CD14-positive monocyte (primary cell): ENCODE measurements at regions of chr13 and their contacts with region 1.

Region 1: DNA sequence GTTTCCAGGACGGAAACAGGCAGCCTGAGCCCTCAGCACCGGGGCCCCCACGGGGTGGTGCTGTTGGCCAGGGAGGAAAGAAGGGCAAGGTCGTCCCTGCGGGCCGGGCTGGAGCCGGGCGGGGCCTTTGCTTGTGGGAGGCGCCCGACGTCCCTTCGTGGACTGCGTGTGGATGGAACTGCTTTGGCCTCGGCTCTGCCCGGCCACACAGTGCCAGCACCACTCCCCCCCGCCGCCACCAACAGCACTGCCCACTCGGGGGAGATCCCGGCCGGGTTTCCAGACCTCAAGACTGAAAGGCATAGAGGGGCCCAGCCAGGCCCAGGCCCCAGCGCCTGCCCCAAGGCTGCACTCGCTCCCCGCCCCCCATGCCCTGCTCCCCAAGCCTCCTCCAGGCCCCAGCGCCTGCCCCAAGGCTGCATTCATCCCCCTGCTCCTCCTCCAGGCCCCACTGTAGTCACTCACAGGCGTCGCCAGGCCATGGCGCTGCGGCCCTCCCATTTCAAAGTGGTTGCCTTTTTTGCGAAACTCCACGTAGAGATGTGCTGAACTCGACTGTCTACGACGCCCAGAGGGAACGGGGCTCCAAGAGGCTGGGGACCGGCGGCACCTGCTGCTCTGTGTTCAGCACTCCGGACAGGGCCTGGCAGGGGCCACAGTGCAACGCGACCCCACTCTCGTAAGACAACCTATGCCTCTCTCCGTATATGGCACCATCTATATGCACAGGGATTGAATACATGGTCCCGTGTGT is 22.5 kb downstream of the C13orf46 start:
- DNase-seq: peak; percentile 71 to 74 (median 73)
- H3K4me3 ChIP-seq: peak overlapping the region in 1 of 3 experiments; percentile 50
- H3K4me3 Mint-ChIP-seq: peak overlapping the region; percentile 56 to 63
- H3K27ac ChIP-seq: no peak overlapping the region
- H3K27ac Mint-ChIP-seq: no peak overlapping the region
- H3K4me1 ChIP-seq: peaks cover 9 to 10% of the 10 kb centered on the region in 2 donors
- H3K4me1 Mint-ChIP-seq: peaks cover 16% of the 10 kb centered on the region
- H3K27me3 ChIP-seq: peaks cover 0 to 2% of the 10 kb centered on the region in 2 donors
- H3K27me3 Mint-ChIP-seq: peaks cover 0 to 12% (median 2%) of the 10 kb centered on the region in 3 donors
- CTCF ChIP-seq: peak; percentile 69

Region 2: DNA sequence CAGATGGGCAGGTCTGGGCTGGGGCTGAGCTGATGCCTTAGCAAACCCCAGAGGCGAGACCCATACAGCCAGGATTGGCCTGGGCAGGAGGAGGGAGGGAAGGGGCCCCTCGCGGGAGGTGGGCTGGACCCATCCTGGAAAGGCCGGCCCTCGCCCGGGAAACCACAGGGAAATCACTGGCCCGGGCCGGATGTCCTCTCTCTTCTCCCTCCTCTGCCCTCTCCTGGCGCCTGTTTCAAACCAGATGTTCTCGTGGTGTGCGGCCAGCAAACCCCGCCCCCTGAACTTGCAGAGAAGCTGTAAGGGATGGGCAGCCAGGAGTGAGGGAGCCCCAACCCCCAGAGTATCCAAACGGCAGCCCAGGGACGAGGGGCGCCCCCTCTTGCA is 149.3 kb before region 1 on chr13:
- intact Hi-C with region 1: no loop called
- DNase-seq: no peak
- H3K4me3 ChIP-seq: no peak overlapping the region
- H3K4me3 Mint-ChIP-seq: no peak overlapping the region
- H3K27ac ChIP-seq: no peak overlapping the region
- H3K27ac Mint-ChIP-seq: no peak overlapping the region
- H3K4me1 ChIP-seq: no peaks in the 10 kb centered on the region
- H3K4me1 Mint-ChIP-seq: no peaks in the 10 kb centered on the region
- H3K27me3 ChIP-seq: no peaks in the 10 kb centered on the region
- H3K27me3 Mint-ChIP-seq: peaks cover 0 to 6% (median 0%) of the 10 kb centered on the region in 3 donors
- CTCF ChIP-seq: no peak

Region 3: GRCh38 chr13:114099918-114100445 is 148.6 kb after region 1 on chr13:
- intact Hi-C with region 1: loop called in 1 of 2 experiments (anchors 5 kb)
- DNase-seq: no peak
- H3K4me3 ChIP-seq: no peak overlapping the region
- H3K4me3 Mint-ChIP-seq: no peak overlapping the region
- H3K27ac ChIP-seq: no peak overlapping the region
- H3K27ac Mint-ChIP-seq: peak overlapping the region in 3 of 7 donors; percentile 40 to 69 (median 45)
- H3K4me1 ChIP-seq: peaks cover 0 to 21% of the 10 kb centered on the region in 2 donors
- H3K4me1 Mint-ChIP-seq: peaks cover 41% of the 10 kb centered on the region
- H3K27me3 ChIP-seq: no peaks in the 10 kb centered on the region
- H3K27me3 Mint-ChIP-seq: no peaks in the 10 kb centered on the region
- CTCF ChIP-seq: no peak

Region 4: GRCh38 chr13:114226699-114227323 is 275.4 kb after region 1 on chr13:
- intact Hi-C with region 1: loop called (anchors 1 to 5 kb)
- DNase-seq: peak; percentile 68 to 80 (median 79)
- H3K4me3 ChIP-seq: no peak overlapping the region
- H3K4me3 Mint-ChIP-seq: no peak overlapping the region
- H3K27ac ChIP-seq: no peak overlapping the region
- H3K27ac Mint-ChIP-seq: peak overlapping the region in 1 of 7 donors; percentile 43
- H3K4me1 ChIP-seq: peaks cover 36 to 40% of the 10 kb centered on the region in 2 donors
- H3K4me1 Mint-ChIP-seq: peaks cover 42% of the 10 kb centered on the region
- H3K27me3 ChIP-seq: no peaks in the 10 kb centered on the region
- H3K27me3 Mint-ChIP-seq: peaks cover 9 to 12% (median 11%) of the 10 kb centered on the region in 3 donors
- CTCF ChIP-seq: peak; percentile 83